K562 (cell line): ENCODE measurements at regions of chr1 and their contacts with region 1.

Region 1: DNA sequence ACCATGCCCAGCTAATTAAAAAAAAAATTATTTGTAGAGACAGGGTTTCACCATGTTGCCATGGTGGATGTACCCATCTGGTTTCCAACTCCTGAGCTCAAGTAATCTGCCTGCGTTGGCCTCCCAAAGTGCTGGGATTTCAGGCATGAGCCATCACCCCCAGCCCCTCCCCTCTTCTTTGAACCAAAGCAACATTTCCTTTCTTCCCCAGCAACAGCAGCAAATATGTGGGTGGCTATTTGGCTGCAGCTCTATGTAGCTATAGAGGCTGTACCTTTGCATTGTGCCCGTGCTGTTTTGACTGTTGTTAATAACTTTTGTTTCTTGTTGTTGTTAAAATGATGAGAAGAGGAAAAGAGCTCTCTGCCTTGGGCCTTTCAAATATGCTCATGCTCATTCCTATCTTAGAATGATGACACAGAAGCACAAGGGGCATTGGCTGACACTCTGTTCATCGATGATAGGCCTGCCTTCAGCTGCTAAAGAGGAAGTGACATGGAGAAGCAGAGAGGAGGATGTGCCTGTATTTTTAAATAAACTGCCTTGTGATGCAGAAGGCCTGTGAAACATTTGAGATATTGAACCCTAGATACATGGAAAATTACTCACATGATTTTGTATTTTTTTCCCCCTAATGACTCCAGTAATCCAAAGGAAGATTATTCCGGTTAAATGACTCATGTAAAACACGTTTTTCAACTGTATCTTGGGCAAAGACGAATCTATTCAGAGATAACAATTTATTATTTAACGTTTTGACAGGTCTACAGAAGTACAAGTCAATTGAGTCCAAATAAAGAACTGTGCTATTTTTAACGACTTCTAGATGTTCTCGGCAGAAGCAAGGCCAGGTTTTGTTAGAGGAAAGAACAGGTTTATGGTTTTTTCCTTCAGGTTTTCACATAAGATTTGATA is 20.5 kb upstream of the XPR1 start:
- DNase-seq: peak; percentile 79 to 94 (median 83)
- ATAC-seq: peak; percentile 87
- H3K4me3 ChIP-seq: no peak overlapping the region
- H3K27ac ChIP-seq: peak overlapping the region; percentile 91
- H3K4me1 ChIP-seq: peaks cover 12 to 54% of the 10 kb centered on the region in 2 experiments
- H3K27me3 ChIP-seq: no peaks in the 10 kb centered on the region
- CTCF ChIP-seq: no peak
- EP300 ChIP-seq: peak; percentile 86; the same call in 1 of the 2 replicates
- POLR2A ChIP-seq: peak; percentile 61; the same call in 1 of the 2 replicates
- RAD21 ChIP-seq: peak in 1 of 2 experiments; percentile 16; a peak in 1 of 4 replicates

Region 2: GRCh38 chr1:179599623-179600249 is 1011.5 kb before region 1 on chr1:
- CTCF ChIA-PET with region 1: no interaction called
- POLR2A ChIA-PET with region 1: no interaction called
- in situ Hi-C with region 1: no loop called
- intact Hi-C with region 1: no loop called
- DNase-seq: peak; percentile 26 to 52 (median 28)
- ATAC-seq: peak; percentile 87
- H3K4me3 ChIP-seq: no peak overlapping the region
- H3K27ac ChIP-seq: no peak overlapping the region
- H3K4me1 ChIP-seq: no peaks in the 10 kb centered on the region
- H3K27me3 ChIP-seq: no peaks in the 10 kb centered on the region
- CTCF ChIP-seq: peak; percentile 44 to 61 (median 53)
- EP300 ChIP-seq: no peak
- POLR2A ChIP-seq: no peak
- RAD21 ChIP-seq: peak; percentile 23 to 71; a peak in 2 of 4 replicates

Region 3: GRCh38 chr1:180563026-180563827 is 48.0 kb before region 1 on chr1:
- CTCF ChIA-PET with region 1: no interaction called
- POLR2A ChIA-PET with region 1: interaction called, 6 read pairs
- in situ Hi-C with region 1: no loop called
- intact Hi-C with region 1: loop called (anchors 2 kb)
- DNase-seq: peak; percentile 83 to 88 (median 85)
- ATAC-seq: peak; percentile 95
- H3K4me3 ChIP-seq: no peak overlapping the region
- H3K27ac ChIP-seq: peak overlapping the region; percentile 84
- H3K4me1 ChIP-seq: peaks cover 19 to 38% of the 10 kb centered on the region in 2 experiments
- H3K27me3 ChIP-seq: no peaks in the 10 kb centered on the region
- CTCF ChIP-seq: no peak
- EP300 ChIP-seq: peak; percentile 19; the same call in 1 of the 2 replicates
- POLR2A ChIP-seq: peak; percentile 58; the same call in 1 of the 2 replicates
- RAD21 ChIP-seq: peak in 1 of 2 experiments; percentile 25; a peak in 2 of 4 replicates

Region 4: DNA sequence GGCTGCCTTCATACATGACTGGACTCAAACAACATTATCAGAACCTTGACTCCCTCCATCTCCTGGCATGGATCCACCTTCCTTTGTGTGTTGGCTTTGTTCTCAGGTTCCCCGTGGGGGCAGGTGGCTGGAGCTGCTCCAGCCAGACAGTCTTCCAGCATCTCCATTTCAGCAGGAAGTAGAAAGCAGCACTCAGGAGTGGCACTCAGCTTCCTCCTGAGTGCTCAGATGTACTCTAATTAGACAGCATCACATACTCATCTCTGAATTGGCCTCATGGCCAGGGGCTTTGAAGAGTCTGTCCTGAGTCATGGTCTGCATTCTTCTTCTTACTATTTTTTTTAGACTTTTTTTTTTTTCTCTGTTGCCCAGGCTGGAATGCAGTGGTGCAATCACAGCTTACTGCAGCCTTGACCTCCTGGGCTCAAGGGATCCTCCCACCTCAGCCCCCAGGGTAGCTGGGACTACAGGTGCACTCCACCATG is 24.6 kb before region 1 on chr1:
- CTCF ChIA-PET with region 1: no interaction called
- POLR2A ChIA-PET with region 1: interaction called, 19 read pairs
- in situ Hi-C with region 1: no loop called
- intact Hi-C with region 1: loop called (anchors 1 kb)
- DNase-seq: peak in 2 of 4 experiments; percentile 33 to 73
- ATAC-seq: peak; percentile 6
- H3K4me3 ChIP-seq: no peak overlapping the region
- H3K27ac ChIP-seq: peak overlapping the region; percentile 93
- H3K4me1 ChIP-seq: peaks cover 21 to 29% of the 10 kb centered on the region in 2 experiments
- H3K27me3 ChIP-seq: no peaks in the 10 kb centered on the region
- CTCF ChIP-seq: no peak
- EP300 ChIP-seq: no peak
- POLR2A ChIP-seq: no peak
- RAD21 ChIP-seq: no peak

Region 5: GRCh38 chr1:180598333-180598974 is 12.8 kb before region 1 on chr1:
- CTCF ChIA-PET with region 1: no interaction called
- POLR2A ChIA-PET with region 1: interaction called, 19 read pairs
- in situ Hi-C with region 1: no loop called
- intact Hi-C with region 1: no loop called
- DNase-seq: no peak
- ATAC-seq: no peak
- H3K4me3 ChIP-seq: no peak overlapping the region
- H3K27ac ChIP-seq: no peak overlapping the region
- H3K4me1 ChIP-seq: peaks cover 15 to 30% of the 10 kb centered on the region in 2 experiments
- H3K27me3 ChIP-seq: no peaks in the 10 kb centered on the region
- CTCF ChIP-seq: no peak
- EP300 ChIP-seq: no peak
- POLR2A ChIP-seq: no peak
- RAD21 ChIP-seq: no peak